Activated T-helper 1 cell treated with anti-CD3 and anti-CD28 coated beads, Interleukin-12 subunit alpha, Interleukin-12 subunit beta, Interleukin-2, Interleukin-4 antibody, amounts not matched to agents 30 ng/mL and 10 ng/mL and 1 ng/mL, durations not matched to agents 14 hours and 24 hours and 36 hours (primary cell): ENCODE measurements at regions of chr12 and their contacts with region 1.

Region 1: GRCh38 chr12:96047229-96048211 is 12.1 kb upstream of the LTA4H start:
- DNase-seq: peak; percentile 4
- H3K4me3 Mint-ChIP-seq: peak overlapping the region; percentile 67
- H3K27ac Mint-ChIP-seq: peak overlapping the region; percentile 89
- H3K4me1 Mint-ChIP-seq: peaks cover 47% of the 10 kb centered on the region
- H3K27me3 Mint-ChIP-seq: no peaks in the 10 kb centered on the region

Region 2: GRCh38 chr12:94140556-94140955 is 1907.0 kb before region 1 on chr12:
- intact Hi-C with region 1: loop called (anchors 5 kb)
- DNase-seq: peak; percentile 40
- H3K4me3 Mint-ChIP-seq: no peak overlapping the region
- H3K27ac Mint-ChIP-seq: no peak overlapping the region
- H3K4me1 Mint-ChIP-seq: peaks cover 8% of the 10 kb centered on the region
- H3K27me3 Mint-ChIP-seq: peaks cover 18% of the 10 kb centered on the region

Region 3: DNA sequence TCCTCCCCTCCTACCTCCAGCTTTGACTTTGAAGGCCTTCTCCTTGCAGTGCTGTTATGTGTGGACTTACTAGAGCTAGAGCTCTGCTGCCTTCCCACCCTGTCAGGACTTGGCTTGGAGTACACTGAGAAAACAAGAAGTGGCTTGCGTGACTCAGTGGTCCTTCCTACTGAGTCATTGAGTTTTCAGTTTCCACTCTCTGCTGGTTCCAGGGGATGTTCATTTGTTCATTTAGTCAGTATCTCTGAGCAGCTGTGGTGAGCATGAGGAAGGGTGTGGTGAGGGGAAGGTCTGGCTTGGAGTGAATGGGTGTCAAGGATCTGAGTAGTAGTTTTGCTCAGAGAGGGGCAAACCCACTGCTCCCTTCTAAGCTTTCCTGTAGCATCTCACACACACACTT is 129.5 kb after region 1 on chr12:
- intact Hi-C with region 1: loop called (anchors 1 kb)
- DNase-seq: peak; percentile 63
- H3K4me3 Mint-ChIP-seq: peak overlapping the region; percentile 5
- H3K27ac Mint-ChIP-seq: peak overlapping the region; percentile 87
- H3K4me1 Mint-ChIP-seq: peaks cover 27% of the 10 kb centered on the region
- H3K27me3 Mint-ChIP-seq: no peaks in the 10 kb centered on the region

Region 4: DNA sequence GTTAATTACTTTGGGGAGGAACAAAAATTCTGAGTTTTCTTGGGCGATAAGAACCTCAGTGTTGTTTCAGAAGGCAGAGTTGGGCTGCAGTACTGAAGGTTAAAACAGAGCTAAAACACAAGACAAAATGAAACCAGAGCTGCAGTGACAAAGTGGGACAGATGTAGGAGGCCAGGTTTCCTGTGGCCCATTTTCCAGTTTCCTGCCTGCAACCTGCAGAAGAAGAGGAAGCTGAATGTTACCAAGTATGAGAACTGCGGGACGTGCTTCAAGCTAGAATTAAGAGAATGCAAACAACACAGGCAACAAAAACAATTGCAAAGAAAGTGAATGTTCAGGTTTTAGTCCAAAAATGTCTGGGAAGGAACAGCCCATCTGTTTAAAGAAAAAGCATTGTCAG is 164.5 kb after region 1 on chr12:
- intact Hi-C with region 1: loop called (anchors 1 kb)
- DNase-seq: no peak
- H3K4me3 Mint-ChIP-seq: peak overlapping the region; percentile 76
- H3K27ac Mint-ChIP-seq: peak overlapping the region; percentile 76
- H3K4me1 Mint-ChIP-seq: peaks cover 78% of the 10 kb centered on the region
- H3K27me3 Mint-ChIP-seq: no peaks in the 10 kb centered on the region

Region 5: DNA sequence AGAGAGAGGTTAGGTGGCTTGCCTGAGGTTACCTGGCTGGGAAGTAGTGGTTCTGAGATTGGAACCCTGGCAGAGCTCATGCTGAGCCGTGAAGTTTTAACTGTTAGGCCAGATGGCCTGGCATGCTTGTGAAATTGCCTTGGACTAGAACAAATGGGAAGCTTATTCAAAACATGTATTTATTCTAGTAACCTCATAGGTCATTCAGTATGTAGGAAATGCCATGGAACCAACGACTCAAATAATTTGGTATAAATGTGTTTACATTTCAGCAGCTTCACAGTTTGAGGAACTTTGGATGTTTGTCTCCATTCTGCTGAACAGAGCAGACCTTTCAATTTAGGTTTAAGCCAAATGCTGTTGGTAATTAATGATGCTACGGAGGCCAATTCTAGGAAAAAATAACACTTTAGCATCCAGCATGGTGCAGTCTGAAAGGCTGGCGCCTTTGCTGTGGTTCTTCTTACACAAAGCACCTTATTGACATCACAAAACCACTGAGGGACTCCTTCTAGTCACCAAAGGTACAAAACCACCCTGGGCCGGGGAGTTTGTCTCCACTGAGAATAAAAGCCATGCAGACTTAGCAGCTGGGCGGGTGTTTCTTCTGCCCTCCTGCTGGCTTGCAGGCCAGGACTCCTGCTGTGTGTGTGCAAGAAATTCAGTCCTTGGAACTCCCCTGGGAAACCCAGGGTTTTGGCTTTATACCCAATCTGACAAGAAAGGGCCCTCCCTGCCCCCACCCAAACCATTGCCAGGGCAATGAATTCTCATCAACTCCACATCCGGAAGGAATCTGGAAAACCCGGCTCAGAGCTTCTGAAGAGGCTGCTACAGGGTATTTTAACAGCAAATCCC is 210.8 kb after region 1 on chr12:
- intact Hi-C with region 1: no loop called
- DNase-seq: no peak
- H3K4me3 Mint-ChIP-seq: no peak overlapping the region
- H3K27ac Mint-ChIP-seq: no peak overlapping the region
- H3K4me1 Mint-ChIP-seq: peaks cover 15% of the 10 kb centered on the region
- H3K27me3 Mint-ChIP-seq: no peaks in the 10 kb centered on the region

Region 6: GRCh38 chr12:96404696-96405095 is 357.2 kb after region 1 on chr12:
- intact Hi-C with region 1: no loop called
- DNase-seq: no peak
- H3K4me3 Mint-ChIP-seq: no peak overlapping the region
- H3K27ac Mint-ChIP-seq: no peak overlapping the region
- H3K4me1 Mint-ChIP-seq: peaks cover 34% of the 10 kb centered on the region
- H3K27me3 Mint-ChIP-seq: peaks cover 2% of the 10 kb centered on the region

Region 7: DNA sequence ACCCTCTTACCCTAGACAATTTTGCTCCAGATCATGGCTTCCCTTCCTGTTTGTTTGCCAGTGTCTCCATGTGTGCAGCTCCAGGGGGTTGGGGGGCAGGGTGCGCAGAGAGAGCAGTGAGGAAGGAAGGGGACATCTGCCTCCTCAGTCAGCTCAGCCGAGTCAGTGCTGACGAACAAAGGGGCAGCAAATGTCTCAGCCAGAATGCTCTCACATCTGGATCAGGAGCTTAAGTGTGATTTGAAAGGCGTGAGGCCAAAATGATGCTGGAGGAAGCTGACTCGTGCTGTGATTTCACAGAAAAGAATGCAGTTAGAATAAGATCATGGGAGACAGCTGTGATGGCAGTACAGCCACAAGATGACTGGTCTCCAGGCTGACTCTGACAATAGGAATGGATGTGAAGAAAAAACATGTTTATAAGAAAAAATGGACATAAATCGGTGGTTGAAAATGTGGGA is 379.8 kb after region 1 on chr12:
- intact Hi-C with region 1: loop called (anchors 1 kb)
- DNase-seq: no peak
- H3K4me3 Mint-ChIP-seq: peak overlapping the region; percentile 1
- H3K27ac Mint-ChIP-seq: peak overlapping the region; percentile 53
- H3K4me1 Mint-ChIP-seq: peaks cover 52% of the 10 kb centered on the region
- H3K27me3 Mint-ChIP-seq: peaks cover 5% of the 10 kb centered on the region

Region 8: DNA sequence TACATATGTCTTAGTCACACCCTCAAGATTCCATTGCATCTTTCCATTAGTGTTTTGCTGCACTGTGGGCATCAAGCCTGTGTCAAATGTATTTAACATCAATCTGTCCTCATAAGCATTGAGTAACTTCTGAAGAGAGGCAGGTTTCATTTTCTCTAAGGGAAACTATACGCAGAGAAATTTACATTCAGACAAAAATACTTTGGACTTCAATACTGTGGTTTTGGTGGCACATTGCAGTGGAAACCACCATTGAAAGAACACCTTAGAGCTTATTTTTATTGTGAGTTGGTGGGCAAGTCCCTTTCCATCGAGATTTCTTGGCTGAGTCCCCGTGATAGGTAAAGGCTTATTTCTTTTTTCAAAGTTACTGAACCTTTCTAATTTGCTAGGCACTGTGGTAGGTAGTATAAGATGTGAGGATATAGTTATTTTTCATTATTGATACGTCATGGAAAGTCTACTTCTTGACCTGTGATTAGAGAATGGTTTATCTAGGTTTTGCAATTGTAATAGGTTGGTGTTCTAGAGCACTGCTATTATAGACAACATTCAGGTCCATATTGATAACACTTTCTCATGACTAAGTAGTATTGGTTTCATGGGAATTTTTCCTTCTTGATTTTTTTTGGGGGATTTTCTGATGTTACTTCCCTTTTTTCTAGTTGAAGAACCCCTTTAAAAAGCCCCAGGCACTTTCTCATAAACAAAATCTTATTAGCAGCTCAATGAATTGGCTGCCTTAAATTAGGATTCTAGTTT is 523.8 kb after region 1 on chr12:
- intact Hi-C with region 1: loop called (anchors 1 kb)
- DNase-seq: no peak
- H3K4me3 Mint-ChIP-seq: peak overlapping the region; percentile 15
- H3K27ac Mint-ChIP-seq: peak overlapping the region; percentile 40
- H3K4me1 Mint-ChIP-seq: peaks cover 14% of the 10 kb centered on the region
- H3K27me3 Mint-ChIP-seq: no peaks in the 10 kb centered on the region